WTC11 (cell line): ENCODE measurements at regions of chr6 and their contacts with region 1.

Region 1: GRCh38 chr6:49409951-49410542 is 53.0 kb downstream of the MMUT start:
- DNase-seq: peak; percentile 78
- ATAC-seq: peak; percentile 91
- H3K4me3 Mint-ChIP-seq: no peak overlapping the region
- H3K27ac Mint-ChIP-seq: no peak overlapping the region
- H3K4me1 Mint-ChIP-seq: peaks cover 12% of the 10 kb centered on the region
- H3K27me3 Mint-ChIP-seq: no peaks in the 10 kb centered on the region
- CTCF ChIP-seq: peak; percentile 72

Region 2: DNA sequence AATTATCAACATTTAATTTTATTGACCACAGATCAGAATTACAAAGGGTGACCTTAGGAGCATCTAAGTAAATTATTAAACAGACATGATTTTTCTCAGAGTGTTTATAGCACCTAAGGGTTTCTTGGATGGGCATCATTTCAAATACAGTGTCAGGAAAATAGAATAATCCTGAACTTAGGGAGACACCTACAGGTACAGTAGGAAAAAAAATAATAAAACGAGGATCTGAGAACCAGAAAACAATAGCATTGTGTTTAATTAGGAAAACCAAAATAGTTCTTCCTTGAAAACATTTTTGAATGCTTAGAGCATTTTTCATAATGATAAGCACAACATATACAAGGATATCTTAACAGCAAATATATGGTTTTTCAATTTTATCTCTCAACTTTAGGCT is 13.8 kb after region 1 on chr6:
- CTCF ChIA-PET with region 1: interaction called, 11 read pairs
- POLR2A ChIA-PET with region 1: no interaction called
- DNase-seq: no peak
- ATAC-seq: no peak
- H3K4me3 Mint-ChIP-seq: no peak overlapping the region
- H3K27ac Mint-ChIP-seq: no peak overlapping the region
- H3K4me1 Mint-ChIP-seq: peaks cover 5% of the 10 kb centered on the region
- H3K27me3 Mint-ChIP-seq: no peaks in the 10 kb centered on the region
- CTCF ChIP-seq: no peak